ENCODE measurements at regions of chr2 and their contacts with region 1.

Region 1: DNA sequence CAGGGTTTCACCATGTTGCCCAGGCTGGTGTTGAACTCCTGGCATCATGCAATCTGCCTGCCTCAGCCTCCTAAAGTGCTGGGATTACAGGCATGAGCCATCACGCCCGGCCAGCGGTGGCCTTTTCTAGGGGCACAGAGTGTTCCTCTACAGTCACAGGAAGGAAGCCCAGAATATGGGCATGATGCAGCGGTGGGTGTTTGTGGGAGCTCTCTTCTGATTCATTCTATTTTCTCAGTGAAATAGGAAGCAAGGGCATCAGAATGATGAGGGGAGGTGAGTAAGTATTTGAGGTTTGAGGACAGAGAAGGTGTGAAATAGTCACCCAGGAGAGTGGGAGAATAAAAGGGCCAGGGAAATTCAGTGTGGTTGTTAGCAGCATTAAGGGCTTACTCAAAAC is 70.3 kb upstream of the PSME4 start:
- DNase-seq: peak; percentile 80
- ATAC-seq: peak; percentile 98
- H3K4me3 Mint-ChIP-seq: no peak overlapping the region
- H3K27ac Mint-ChIP-seq: no peak overlapping the region
- H3K4me1 Mint-ChIP-seq: no peaks in the 10 kb centered on the region
- H3K27me3 Mint-ChIP-seq: no peaks in the 10 kb centered on the region

Region 2: DNA sequence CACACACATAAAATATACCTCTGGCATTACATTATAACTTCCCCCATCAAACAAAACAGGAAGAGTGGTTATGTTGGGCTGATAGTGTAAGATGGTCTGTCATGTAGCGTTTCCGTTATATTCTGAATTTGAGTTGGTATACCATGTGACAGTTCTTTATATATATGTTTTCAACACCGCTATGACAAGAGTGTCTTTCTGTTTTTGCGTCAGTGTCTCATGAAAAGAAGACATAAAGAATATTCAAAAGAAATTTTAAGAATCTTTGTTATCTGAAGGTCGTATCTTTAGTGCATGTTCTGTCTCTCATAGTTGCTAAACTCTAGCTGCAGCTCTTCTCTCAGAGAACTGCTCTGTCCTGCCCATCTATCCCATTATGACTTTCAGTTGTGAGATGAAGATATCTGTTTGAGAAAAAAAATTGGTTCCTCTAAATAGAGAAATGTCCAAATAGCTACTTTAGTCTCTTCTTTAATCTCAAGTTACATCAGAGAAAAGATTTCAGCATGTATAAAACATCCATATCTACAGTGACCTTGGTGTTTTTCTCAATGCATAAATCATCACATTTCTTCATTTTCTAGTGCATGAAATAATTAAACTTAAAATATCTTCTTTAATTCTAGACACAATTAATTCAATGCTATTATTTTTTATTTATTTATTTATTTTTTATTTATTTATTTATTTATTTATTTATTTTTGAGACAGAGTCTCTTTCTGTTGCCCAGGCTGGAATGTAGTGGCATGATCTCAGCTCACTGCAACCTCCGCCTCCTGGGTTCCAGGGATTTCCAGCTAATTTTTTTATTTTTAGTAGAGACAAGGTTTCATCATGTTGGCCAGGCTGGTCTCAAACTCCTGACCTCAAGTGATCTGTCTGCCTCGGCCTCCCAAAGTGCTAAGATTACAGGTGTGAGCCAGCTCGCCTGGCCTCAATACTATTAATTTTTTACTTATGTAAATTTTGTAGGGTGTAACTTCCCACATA is 46.0 kb before region 1 on chr2:
- CTCF ChIA-PET with region 1: no interaction called
- POLR2A ChIA-PET with region 1: no interaction called
- intact Hi-C with region 1: loop called (anchors 1 to 2 kb)
- DNase-seq: no peak
- ATAC-seq: peak; percentile 94
- H3K4me3 Mint-ChIP-seq: peak overlapping the region; percentile 24
- H3K27ac Mint-ChIP-seq: peak overlapping the region; percentile 85
- H3K4me1 Mint-ChIP-seq: peaks cover 28% of the 10 kb centered on the region
- H3K27me3 Mint-ChIP-seq: no peaks in the 10 kb centered on the region

Measured in activated CD4-positive, alpha-beta T cell treated with anti-CD3 and anti-CD28 coated beads for 36 hours (primary cell).